Heart right ventricle (tissue), 16 donors: ENCODE measurements at regions of chr20 and their contacts with region 1.

Region 1: DNA sequence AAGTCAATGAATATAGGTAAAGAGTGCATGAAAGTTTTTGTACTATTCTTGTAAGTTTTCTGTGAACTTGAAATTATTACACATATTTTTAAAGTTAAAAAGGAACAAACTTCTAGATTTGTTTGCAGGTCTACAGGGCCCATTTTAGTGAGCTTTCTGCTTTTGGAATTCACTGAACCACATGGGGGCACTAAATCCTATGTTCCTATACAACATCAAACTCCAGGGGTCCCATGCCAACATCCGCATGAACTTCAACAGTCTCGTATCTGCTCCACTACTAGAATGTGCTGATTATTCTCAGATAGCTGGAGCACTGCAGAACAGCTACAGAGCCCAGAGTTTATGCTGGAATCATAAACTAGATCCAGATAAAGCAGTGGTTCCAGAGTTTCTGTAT is 347.9 kb upstream of the SPTLC3 start:
- DNase-seq: no peak
- ATAC-seq: no peak
- H3K4me3 ChIP-seq: no peak overlapping the region
- H3K27ac ChIP-seq: no peak overlapping the region
- H3K4me1 ChIP-seq: no peaks in the 10 kb centered on the region
- H3K27me3 ChIP-seq: no peaks in the 10 kb centered on the region
- CTCF ChIP-seq: peak in 2 of 9 donors; percentile 26 to 31

Region 2: DNA sequence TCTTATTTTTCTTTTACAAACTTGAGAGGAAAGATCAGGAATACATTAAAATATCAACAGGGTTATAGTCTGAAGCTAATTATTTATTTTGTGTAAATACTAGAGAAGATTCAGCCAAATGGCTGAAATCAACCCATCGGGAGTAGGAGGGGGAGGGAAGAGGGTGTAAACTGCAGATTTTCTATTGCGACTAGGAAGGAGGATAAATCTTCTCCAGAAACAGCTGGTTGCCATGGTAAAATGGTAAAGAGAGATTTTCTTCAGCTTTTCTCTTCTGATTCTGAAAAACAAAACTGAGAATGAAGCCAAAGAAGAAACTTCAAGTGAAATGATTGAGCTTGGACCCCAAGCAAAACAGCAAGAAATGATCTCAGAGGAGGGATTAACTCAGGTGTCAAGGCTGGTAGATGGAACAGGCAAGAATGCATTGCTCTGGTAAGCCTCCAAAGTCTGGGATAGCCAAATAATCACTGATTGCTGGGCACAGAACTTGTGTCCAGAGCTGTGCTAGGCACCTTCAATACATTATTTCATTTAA is 154.4 kb after region 1 on chr20:
- intact Hi-C with region 1: loop called in 1 of 10 experiments (anchors 5 kb)
- DNase-seq: no peak
- ATAC-seq: no peak
- H3K4me3 ChIP-seq: no peak overlapping the region
- H3K27ac ChIP-seq: no peak overlapping the region
- H3K4me1 ChIP-seq: no peaks in the 10 kb centered on the region
- H3K27me3 ChIP-seq: no peaks in the 10 kb centered on the region
- CTCF ChIP-seq: no peak